Endothelial cell of umbilical vein (primary cell): ENCODE measurements at regions of chr20 and their contacts with region 1.

Region 1: DNA sequence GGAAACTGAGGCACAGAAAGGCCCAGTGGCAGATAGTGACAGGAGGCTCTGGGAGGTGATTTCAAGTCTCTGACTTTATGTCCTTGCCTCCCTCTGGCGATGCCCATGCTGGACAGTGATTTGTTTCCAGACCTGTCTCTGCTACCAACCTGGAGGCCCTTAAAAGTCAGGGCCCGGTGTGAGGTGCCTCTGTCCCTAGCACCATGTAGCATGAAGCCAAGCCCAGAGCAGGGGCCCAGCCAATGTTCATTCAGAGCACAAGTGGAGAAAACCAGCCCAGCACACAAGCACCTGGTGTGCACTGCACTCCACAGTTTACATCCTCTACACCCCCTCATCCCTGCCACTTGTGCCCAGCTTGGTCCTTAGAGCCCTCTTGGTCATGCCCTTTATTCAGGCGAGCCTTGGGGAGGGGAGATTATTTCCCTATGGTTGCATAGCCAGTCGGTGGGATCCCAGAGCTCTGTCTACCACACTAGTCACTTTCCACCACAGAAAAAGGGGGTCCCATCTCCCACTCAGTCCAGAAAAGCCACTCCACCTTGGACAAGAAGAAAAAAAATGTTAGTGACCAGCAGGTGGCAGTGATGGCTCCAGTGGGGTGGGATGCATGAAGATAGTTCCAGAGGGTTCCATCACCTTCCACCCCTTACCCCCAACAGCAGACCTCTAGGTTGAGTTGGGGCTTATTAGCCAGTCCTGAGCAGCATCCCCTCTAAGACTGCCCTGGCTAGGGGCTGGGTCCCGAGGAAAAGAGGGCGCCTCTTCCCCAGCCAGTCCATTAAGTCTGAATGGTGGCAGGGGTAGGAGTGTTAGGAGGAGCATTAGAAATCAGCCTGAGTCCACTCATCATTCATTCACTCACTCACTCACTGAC is 30.9 kb downstream of the KIAA1755 start:
- DNase-seq: peak; percentile 46
- H3K4me3 ChIP-seq: no peak overlapping the region
- H3K27ac ChIP-seq: no peak overlapping the region
- H3K4me1 ChIP-seq: peaks cover 10% of the 10 kb centered on the region
- H3K27me3 ChIP-seq: peaks cover 0 to 1% of the 10 kb centered on the region in 2 experiments
- CTCF ChIP-seq: peak; percentile 48 to 56
- POLR2A ChIP-seq: no peak

Region 2: GRCh38 chr20:38275815-38276550 is 46.4 kb after region 1 on chr20:
- CTCF ChIA-PET with region 1: interaction called, 14 read pairs
- POLR2A ChIA-PET with region 1: no interaction called
- dilution Hi-C with region 1: no loop called
- intact Hi-C with region 1: no loop called
- DNase-seq: peak; percentile 89
- H3K4me3 ChIP-seq: no peak overlapping the region
- H3K27ac ChIP-seq: peak overlapping the region; percentile 87
- H3K4me1 ChIP-seq: peaks cover 43% of the 10 kb centered on the region
- H3K27me3 ChIP-seq: no peaks in the 10 kb centered on the region
- CTCF ChIP-seq: no peak
- POLR2A ChIP-seq: peak; percentile 64

Region 3: GRCh38 chr20:38304845-38305447 is 75.3 kb after region 1 on chr20:
- CTCF ChIA-PET with region 1: interaction called, 204 read pairs
- POLR2A ChIA-PET with region 1: no interaction called
- dilution Hi-C with region 1: no loop called
- intact Hi-C with region 1: loop called (anchors 1 kb)
- DNase-seq: peak; percentile 30
- H3K4me3 ChIP-seq: no peak overlapping the region
- H3K27ac ChIP-seq: no peak overlapping the region
- H3K4me1 ChIP-seq: no peaks in the 10 kb centered on the region
- H3K27me3 ChIP-seq: peaks cover 2% of the 10 kb centered on the region in 2 experiments
- CTCF ChIP-seq: peak; percentile 40 to 70
- POLR2A ChIP-seq: no peak

Region 4: GRCh38 chr20:38321959-38322598 is 92.5 kb after region 1 on chr20:
- CTCF ChIA-PET with region 1: interaction called, 182 read pairs
- POLR2A ChIA-PET with region 1: no interaction called
- dilution Hi-C with region 1: no loop called
- intact Hi-C with region 1: loop called (anchors 1 kb)
- DNase-seq: peak; percentile 69
- H3K4me3 ChIP-seq: no peak overlapping the region
- H3K27ac ChIP-seq: no peak overlapping the region
- H3K4me1 ChIP-seq: no peaks in the 10 kb centered on the region
- H3K27me3 ChIP-seq: peaks cover 2 to 5% of the 10 kb centered on the region in 2 experiments
- CTCF ChIP-seq: peak; percentile 66 to 69
- POLR2A ChIP-seq: no peak

Region 5: DNA sequence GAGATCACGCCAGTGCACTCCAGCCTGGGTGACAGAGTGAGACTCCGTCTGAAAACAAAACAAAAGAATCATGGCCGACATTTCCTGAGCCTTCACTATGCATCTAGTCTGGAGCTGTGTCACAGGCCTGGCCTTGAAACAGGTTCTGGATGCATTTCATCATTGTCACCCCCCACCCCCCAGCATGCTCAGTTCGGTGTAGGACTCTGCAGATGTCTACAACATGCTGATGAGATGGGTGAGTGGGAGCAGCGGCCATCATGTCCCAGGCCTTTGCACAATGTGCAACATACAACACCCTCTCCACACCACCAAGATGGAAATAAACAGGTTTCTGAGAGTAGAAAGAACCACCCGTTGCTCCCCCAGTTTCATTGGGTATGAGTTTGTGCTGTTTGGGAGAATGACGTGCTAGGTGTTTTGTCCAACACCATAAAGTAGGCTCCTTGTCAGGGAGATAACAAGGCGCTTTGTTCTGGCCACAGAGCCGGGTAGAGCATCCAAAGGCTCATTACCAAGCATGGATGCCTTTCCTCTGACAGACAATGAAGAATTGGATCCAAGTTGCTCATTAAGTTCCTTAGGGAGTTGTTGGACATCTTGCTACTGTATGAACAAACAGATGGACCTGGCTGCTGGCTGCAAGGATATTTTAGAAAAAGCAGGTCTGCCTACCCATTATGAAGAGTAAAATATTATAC is 183.4 kb after region 1 on chr20:
- CTCF ChIA-PET with region 1: interaction called, 59 read pairs
- POLR2A ChIA-PET with region 1: interaction called, 3 read pairs
- dilution Hi-C with region 1: no loop called
- intact Hi-C with region 1: loop called (anchors 1 kb)
- DNase-seq: no peak
- H3K4me3 ChIP-seq: no peak overlapping the region
- H3K27ac ChIP-seq: no peak overlapping the region
- H3K4me1 ChIP-seq: no peaks in the 10 kb centered on the region
- H3K27me3 ChIP-seq: no peaks in the 10 kb centered on the region
- CTCF ChIP-seq: no peak
- POLR2A ChIP-seq: no peak